Uterus (tissue), 4 donors: ENCODE measurements at regions of chr1 and their contacts with region 1.

Region 1: GRCh38 chr1:77978969-77979876 is at the start of gene FUBP1:
- DNase-seq: peak; percentile 96 to 98
- H3K4me3 ChIP-seq: peak within 1 kb of the TSS; percentile 71 to 78
- H3K27ac ChIP-seq: peak within 1 kb of the TSS; percentile 97 to 100
- H3K4me1 ChIP-seq: peaks cover 0 to 5% of the 10 kb centered on the region in 2 donors
- H3K27me3 ChIP-seq: no peaks in the 10 kb centered on the region
- CTCF ChIP-seq: peak; percentile 63 to 84 (median 71)
- POLR2A ChIP-seq: peak; percentile 74 to 76
- total RNA-seq, gene FUBP1: 40.6 to 300 (median 116) TPM

Region 2: GRCh38 chr1:78114034-78114956 is 135.1 kb after region 1 on chr1:
- intact Hi-C with region 1: loop called (anchors 10 kb)
- DNase-seq: peak; percentile 27 to 48
- H3K4me3 ChIP-seq: no peak overlapping the region
- H3K27ac ChIP-seq: peak overlapping the region in 1 of 2 donors; percentile 49
- H3K4me1 ChIP-seq: no peaks in the 10 kb centered on the region
- H3K27me3 ChIP-seq: no peaks in the 10 kb centered on the region
- CTCF ChIP-seq: peak; percentile 76 to 92 (median 81)
- POLR2A ChIP-seq: no peak